ENCODE measurements at regions of chr1 and their contacts with region 1.

Region 1: GRCh38 chr1:224329842-224330753 is at the start of gene NVL:
- DNase-seq: peak; percentile 93
- total RNA-seq, gene NVL: 11.6 TPM

Region 2: GRCh38 chr1:224182866-224183590 is 147.1 kb before region 1 on chr1 and contains the start of gene DEGS1:
- intact Hi-C with region 1: loop called (anchors 5 kb)
- DNase-seq: peak; percentile 95
- total RNA-seq, gene DEGS1: 36.1 TPM

Region 3: DNA sequence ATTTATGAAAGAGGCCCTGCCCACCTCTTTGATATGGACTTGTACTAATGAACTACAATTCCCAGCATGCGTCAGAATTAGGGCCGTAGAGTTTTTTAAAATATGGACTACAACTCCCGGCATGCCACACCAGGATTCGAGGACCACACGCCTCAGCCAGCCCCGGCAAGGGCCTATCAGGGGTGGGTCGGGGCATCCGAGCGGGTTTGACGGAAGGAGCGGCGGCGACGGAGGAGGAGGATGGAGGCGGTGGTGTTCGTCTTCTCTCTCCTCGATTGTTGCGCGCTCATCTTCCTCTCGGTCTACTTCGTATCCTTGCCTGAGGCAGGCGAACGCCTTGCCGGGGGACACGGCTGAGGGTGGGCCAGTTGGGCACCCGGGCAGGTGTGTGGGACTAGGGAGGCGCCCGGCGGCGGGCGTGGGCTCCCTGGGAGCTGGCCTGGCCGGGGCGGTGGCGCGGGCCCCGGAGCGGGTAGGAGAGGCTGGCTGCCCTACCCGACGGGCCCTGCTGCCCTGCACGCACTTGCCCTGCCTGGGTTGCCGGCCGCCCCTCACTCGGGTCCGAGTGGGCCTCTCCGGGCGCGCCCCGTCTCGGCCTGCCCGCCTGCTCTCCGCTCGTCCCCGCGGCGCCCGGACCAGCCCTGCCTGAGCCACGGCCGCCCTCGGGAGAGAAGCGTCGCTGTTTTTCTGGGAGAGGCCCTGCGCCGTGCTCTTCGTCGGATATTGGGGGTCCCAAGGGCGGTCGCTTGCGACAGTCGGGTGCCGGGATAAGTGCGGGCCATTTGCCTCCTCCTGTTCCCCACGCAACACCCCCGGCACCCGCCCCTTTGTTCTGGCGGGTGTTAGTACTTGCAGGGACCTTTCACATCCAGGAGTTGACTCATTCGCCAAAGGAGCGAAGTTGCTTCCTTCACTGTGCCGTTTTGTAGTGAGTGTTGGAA is 26.9 kb after region 1 on chr1 and contains the start of gene CNIH4:
- intact Hi-C with region 1: loop called (anchors 2 kb)
- DNase-seq: peak; percentile 94
- total RNA-seq, gene CNIH4: 30.1 TPM